Panc1 (cell line): ENCODE measurements at regions of chr19 and their contacts with region 1.

Region 1: GRCh38 chr19:38769635-38770211 is 3.6 kb downstream of the LGALS7 start:
- DNase-seq: no peak
- ATAC-seq: peak; percentile 62
- H3K4me3 ChIP-seq: no peak overlapping the region
- H3K27ac ChIP-seq: peak overlapping the region; percentile 48; the same call in 1 of the 2 replicates
- H3K4me1 ChIP-seq: peaks cover 4% of the 10 kb centered on the region; the same call in 1 of the 2 replicates
- H3K27me3 ChIP-seq: no peaks in the 10 kb centered on the region
- CTCF ChIP-seq: no peak; the same call in 1 of the 2 replicates

Region 2: GRCh38 chr19:38527466-38528136 is 242.1 kb before region 1 on chr19:
- CTCF ChIA-PET with region 1: no interaction called
- POLR2A ChIA-PET with region 1: no interaction called
- in situ Hi-C with region 1: loop called (anchors 5 kb)
- intact Hi-C with region 1: no loop called
- DNase-seq: no peak
- ATAC-seq: peak; percentile 20
- H3K4me3 ChIP-seq: peak overlapping the region in 1 of 2 experiments; percentile 32; a peak in 2 of 4 replicates
- H3K27ac ChIP-seq: no peak overlapping the region
- H3K4me1 ChIP-seq: peaks cover 4% of the 10 kb centered on the region; the same call in 1 of the 2 replicates
- H3K27me3 ChIP-seq: no peaks in the 10 kb centered on the region
- CTCF ChIP-seq: no peak

Region 3: DNA sequence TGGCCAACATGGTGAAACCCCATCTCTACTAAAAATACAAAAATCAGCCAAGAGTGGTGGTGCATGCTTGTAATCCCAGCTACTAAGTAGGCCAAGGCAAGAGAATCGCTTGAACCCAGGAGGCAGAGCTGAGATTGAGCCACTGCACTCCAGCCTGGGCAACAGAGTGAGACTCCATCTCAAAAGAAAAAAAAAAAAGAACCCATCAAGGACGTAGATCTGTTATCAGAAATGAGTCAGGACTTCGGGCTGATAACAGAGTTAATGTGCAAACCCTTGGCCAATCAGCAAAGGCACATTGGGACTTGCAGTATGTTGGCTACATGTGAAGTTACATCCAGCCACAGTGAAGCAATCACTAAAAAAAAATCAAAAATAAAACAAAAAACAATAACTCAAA is 14.5 kb after region 1 on chr19:
- CTCF ChIA-PET with region 1: interaction called, 27 read pairs
- POLR2A ChIA-PET with region 1: interaction called, 12 read pairs
- in situ Hi-C with region 1: no loop called
- intact Hi-C with region 1: no loop called
- DNase-seq: no peak
- ATAC-seq: no peak
- H3K4me3 ChIP-seq: no peak overlapping the region
- H3K27ac ChIP-seq: no peak overlapping the region
- H3K4me1 ChIP-seq: peaks cover 9% of the 10 kb centered on the region
- H3K27me3 ChIP-seq: no peaks in the 10 kb centered on the region
- CTCF ChIP-seq: no peak

Region 4: DNA sequence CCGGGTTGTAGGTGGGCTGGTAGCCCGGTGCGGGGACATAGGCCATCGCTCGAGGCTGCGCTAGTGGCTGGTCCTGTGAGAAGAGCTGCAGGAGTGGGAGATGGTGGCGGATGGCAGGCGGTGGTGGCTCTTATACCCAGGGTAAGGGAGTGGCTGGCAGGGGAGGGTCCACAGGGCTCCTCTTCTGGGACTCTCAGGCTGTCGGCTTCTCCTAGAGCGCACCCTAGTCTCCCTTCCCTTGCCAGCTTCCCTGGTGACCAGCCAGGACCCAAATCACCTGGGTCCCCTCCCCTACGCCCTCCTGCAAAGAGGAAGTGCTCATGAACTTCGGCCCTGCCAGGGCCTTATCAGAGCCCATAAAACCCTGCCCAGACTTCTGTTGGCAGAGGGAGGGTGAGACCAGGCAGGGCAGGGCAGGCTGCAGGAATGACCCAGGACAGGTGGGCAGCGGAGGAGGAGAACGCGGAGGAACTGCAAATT is 43.2 kb after region 1 on chr19 and contains the start of gene LGALS4:
- CTCF ChIA-PET with region 1: interaction called, 14 read pairs
- POLR2A ChIA-PET with region 1: interaction called, 19 read pairs
- in situ Hi-C with region 1: no loop called
- intact Hi-C with region 1: no loop called
- DNase-seq: no peak
- ATAC-seq: peak; percentile 43
- H3K4me3 ChIP-seq: no peak within 1 kb of the TSS
- H3K27ac ChIP-seq: no peak within 1 kb of the TSS; the same call in 1 of the 2 replicates
- H3K4me1 ChIP-seq: peaks cover 4% of the 10 kb centered on the region; the same call in 1 of the 2 replicates
- H3K27me3 ChIP-seq: no peaks in the 10 kb centered on the region
- CTCF ChIP-seq: no peak
- total RNA-seq, gene LGALS4: 3.9 TPM

Region 5: DNA sequence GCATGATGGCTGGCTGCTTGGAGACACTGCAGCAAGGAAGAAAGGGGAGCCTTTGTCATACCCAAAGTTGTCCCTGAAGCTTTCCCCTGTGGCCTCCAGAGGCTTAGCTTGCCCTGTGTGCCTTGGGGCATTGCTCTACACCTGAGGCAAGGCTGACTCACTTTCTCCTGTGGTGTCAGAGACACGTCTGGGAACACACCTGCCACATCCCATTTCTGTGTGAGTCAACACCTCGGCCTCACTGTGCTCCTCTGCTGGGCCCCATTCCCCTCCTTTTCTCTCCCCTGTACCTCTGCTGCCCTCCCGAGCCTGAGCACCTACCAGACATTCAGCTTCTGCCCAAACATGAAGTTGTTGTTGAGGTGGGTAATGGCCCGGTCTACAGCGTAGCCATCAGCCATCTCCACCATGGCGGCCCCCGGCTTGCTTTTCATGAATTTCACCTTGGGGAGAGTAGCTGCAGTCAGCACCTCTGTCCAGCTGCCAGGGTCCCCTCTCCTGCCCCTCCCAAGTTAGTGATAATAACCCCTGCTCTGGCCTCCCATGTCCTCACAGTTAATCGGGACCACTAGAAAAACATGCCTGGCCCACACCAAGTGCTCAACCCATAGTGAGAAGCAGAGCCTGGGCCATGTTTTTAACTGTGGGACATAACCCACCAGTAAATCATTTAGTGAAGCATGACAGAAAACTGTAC is 69.0 kb after region 1 on chr19:
- CTCF ChIA-PET with region 1: interaction called, 4 read pairs
- POLR2A ChIA-PET with region 1: no interaction called
- in situ Hi-C with region 1: loop called (anchors 5 kb)
- intact Hi-C with region 1: no loop called
- DNase-seq: no peak
- ATAC-seq: peak; percentile 39
- H3K4me3 ChIP-seq: no peak overlapping the region
- H3K27ac ChIP-seq: peak overlapping the region; percentile 86
- H3K4me1 ChIP-seq: peaks cover 98% of the 10 kb centered on the region
- H3K27me3 ChIP-seq: no peaks in the 10 kb centered on the region
- CTCF ChIP-seq: no peak

Region 6: DNA sequence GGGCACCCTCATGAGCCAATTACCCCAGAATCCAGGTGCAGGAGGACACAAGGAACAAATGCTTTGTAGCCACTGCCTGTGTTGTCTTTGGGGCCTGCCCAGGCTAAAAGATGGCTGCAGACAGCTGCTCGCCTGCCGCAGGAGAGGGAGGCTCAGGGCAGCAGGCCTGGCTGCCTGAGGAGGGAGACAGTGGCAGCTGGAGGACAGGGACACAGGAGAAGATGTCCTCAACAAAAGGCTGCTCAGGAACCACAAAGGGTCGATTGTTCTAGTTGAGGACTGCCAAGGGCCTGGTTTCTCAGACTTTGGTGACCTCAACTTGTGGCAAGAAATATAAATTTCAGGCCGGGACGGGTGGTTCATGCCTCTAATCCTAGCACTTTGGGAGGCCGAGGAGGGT is 122.0 kb after region 1 on chr19:
- CTCF ChIA-PET with region 1: interaction called, 11 read pairs
- POLR2A ChIA-PET with region 1: no interaction called
- in situ Hi-C with region 1: no loop called
- intact Hi-C with region 1: no loop called
- DNase-seq: no peak
- ATAC-seq: no peak
- H3K4me3 ChIP-seq: no peak overlapping the region
- H3K27ac ChIP-seq: no peak overlapping the region
- H3K4me1 ChIP-seq: no peaks in the 10 kb centered on the region
- H3K27me3 ChIP-seq: no peaks in the 10 kb centered on the region
- CTCF ChIP-seq: no peak